ENCODE measurements at regions of chr3 and their contacts with region 1.

Region 1: DNA sequence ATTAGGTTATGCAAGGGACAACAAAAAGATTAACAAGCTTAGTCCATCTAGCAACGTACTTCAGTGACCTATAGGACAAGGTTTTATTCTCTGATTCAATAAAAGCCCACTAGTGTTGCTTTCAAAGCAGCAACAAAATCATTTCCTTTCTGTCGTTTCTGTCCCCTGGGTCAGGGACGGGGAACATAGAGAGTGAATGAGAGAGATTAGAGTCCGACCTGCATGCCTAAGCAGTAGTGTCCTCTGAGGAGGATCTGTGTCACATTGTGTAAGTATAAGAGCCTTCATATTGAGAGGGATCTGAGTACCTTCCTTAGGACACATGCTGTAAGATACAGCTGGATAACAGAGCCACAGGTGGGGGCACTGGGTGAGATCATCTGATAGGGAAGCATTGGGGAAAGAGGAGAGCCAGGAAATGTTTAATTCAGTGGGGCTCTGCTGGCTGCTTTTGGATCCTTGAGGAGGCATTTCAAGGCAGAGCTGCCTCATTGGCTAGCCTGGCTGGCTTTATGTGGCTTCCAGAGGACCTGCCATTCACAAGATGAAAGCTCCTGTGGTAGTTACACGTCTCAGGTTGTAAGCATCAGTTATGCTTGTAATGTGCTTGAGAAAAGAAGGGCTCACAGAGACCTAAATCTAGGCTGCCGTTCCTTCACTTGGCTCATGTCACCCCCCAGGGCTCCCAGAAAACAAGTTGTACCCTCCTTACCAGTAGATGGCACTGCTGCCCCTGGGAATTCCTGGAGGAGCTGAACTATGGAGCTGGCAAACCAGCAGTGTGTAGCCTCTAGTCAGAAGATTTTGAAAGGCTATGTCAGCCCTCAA is 2.7 kb downstream of the TMEM108 start:
- DNase-seq: peak; percentile 78
- H3K4me3 ChIP-seq: peak overlapping the region; percentile 26 to 27; a peak in 2 of 4 replicates
- H3K27ac ChIP-seq: peak overlapping the region in 1 of 2 experiments; percentile 74; a peak in 2 of 4 replicates
- H3K4me1 ChIP-seq: peaks cover 7 to 24% of the 10 kb centered on the region in 2 experiments; a peak in 3 of 4 replicates
- H3K27me3 ChIP-seq: peaks cover 7% of the 10 kb centered on the region; the same call in 1 of the 2 replicates
- CTCF ChIP-seq: peak; percentile 92
- EP300 ChIP-seq: no peak
- RAD21 ChIP-seq: peak; percentile 99

Region 2: DNA sequence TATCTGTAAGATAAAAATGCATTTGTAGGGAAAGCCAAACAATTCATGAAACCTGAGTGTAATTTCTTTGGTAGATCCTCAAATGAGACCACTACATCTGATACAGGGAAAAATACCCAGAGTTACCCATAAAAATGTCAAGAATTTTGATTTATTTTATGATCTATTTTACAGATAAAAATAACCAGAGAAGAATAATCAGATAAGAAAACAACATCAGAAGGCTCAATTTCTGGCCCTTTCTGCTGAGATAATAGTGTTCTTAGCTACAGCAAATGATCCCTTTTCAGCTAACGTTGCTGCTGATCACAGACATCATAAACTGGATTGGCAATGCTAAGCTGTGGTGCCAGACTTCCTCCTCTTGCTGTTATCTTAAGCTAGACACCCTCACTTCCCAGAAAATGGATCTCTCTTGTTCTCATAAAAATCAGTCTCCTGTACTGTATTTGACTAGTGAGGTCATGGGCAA is 24.0 kb before region 1 on chr3:
- CTCF ChIA-PET with region 1: interaction called, 15 read pairs
- POLR2A ChIA-PET with region 1: no interaction called
- DNase-seq: peak; percentile 63
- H3K4me3 ChIP-seq: no peak overlapping the region
- H3K27ac ChIP-seq: peak overlapping the region in 1 of 2 experiments; percentile 87; a peak in 2 of 4 replicates
- H3K4me1 ChIP-seq: peaks cover 0 to 13% of the 10 kb centered on the region in 2 experiments; a peak in 2 of 4 replicates
- H3K27me3 ChIP-seq: peaks cover 10% of the 10 kb centered on the region; the same call in 1 of the 2 replicates
- CTCF ChIP-seq: no peak
- EP300 ChIP-seq: peak; percentile 19 to 89; a peak in 2 of 4 replicates
- RAD21 ChIP-seq: peak; percentile 27

Region 3: GRCh38 chr3:133169331-133170068 is 128.6 kb after region 1 on chr3:
- CTCF ChIA-PET with region 1: interaction called, 26 read pairs
- POLR2A ChIA-PET with region 1: no interaction called
- DNase-seq: peak; percentile 43
- H3K4me3 ChIP-seq: no peak overlapping the region
- H3K27ac ChIP-seq: peak overlapping the region in 1 of 2 experiments; percentile 72; a peak in 2 of 4 replicates
- H3K4me1 ChIP-seq: peaks cover 7 to 8% of the 10 kb centered on the region in 2 experiments; a peak in 2 of 4 replicates
- H3K27me3 ChIP-seq: no peaks in the 10 kb centered on the region
- CTCF ChIP-seq: no peak
- EP300 ChIP-seq: peak in 1 of 2 experiments; percentile 79; a peak in 1 of 4 replicates
- RAD21 ChIP-seq: peak; percentile 14; the same call in 1 of the 2 replicates

Region 4: GRCh38 chr3:133271539-133271938 is 230.6 kb after region 1 on chr3:
- CTCF ChIA-PET with region 1: interaction called, 25 read pairs
- POLR2A ChIA-PET with region 1: no interaction called
- DNase-seq: no peak
- H3K4me3 ChIP-seq: no peak overlapping the region
- H3K27ac ChIP-seq: peak overlapping the region in 1 of 2 experiments; percentile 99; a peak in 2 of 4 replicates
- H3K4me1 ChIP-seq: peaks cover 0 to 37% of the 10 kb centered on the region in 2 experiments; a peak in 2 of 4 replicates
- H3K27me3 ChIP-seq: no peaks in the 10 kb centered on the region
- CTCF ChIP-seq: no peak
- EP300 ChIP-seq: no peak
- RAD21 ChIP-seq: no peak

Region 5: GRCh38 chr3:133371181-133371580 is 330.3 kb after region 1 on chr3:
- CTCF ChIA-PET with region 1: interaction called, 81 read pairs
- POLR2A ChIA-PET with region 1: no interaction called
- DNase-seq: no peak
- H3K4me3 ChIP-seq: no peak overlapping the region
- H3K27ac ChIP-seq: no peak overlapping the region
- H3K4me1 ChIP-seq: peaks cover 15% of the 10 kb centered on the region in 2 experiments; a peak in 2 of 4 replicates
- H3K27me3 ChIP-seq: no peaks in the 10 kb centered on the region
- CTCF ChIP-seq: no peak
- EP300 ChIP-seq: no peak
- RAD21 ChIP-seq: no peak

Region 6: GRCh38 chr3:133401374-133402135 is 360.6 kb after region 1 on chr3:
- CTCF ChIA-PET with region 1: interaction called, 11 read pairs
- POLR2A ChIA-PET with region 1: no interaction called
- DNase-seq: peak; percentile 77
- H3K4me3 ChIP-seq: no peak overlapping the region
- H3K27ac ChIP-seq: peak overlapping the region in 1 of 2 experiments; percentile 64; a peak in 2 of 4 replicates
- H3K4me1 ChIP-seq: peaks cover 0 to 22% of the 10 kb centered on the region in 2 experiments; a peak in 2 of 4 replicates
- H3K27me3 ChIP-seq: no peaks in the 10 kb centered on the region
- CTCF ChIP-seq: no peak
- EP300 ChIP-seq: no peak
- RAD21 ChIP-seq: no peak